BJ (cell line): ENCODE measurements at regions of chr17 and their contacts with region 1.

Region 1: GRCh38 chr17:70767102-70767701 is 597.9 kb downstream of the KCNJ2 start:
- DNase-seq: no peak
- H3K4me3 ChIP-seq: no peak overlapping the region
- H3K27me3 ChIP-seq: no peaks in the 10 kb centered on the region
- CTCF ChIP-seq: peak; percentile 68

Region 2: GRCh38 chr17:70739065-70739464 is 28.1 kb before region 1 on chr17:
- CTCF ChIA-PET with region 1: no interaction called
- POLR2A ChIA-PET with region 1: no interaction called
- DNase-seq: no peak
- H3K4me3 ChIP-seq: no peak overlapping the region
- H3K27me3 ChIP-seq: no peaks in the 10 kb centered on the region
- CTCF ChIP-seq: no peak

Region 3: DNA sequence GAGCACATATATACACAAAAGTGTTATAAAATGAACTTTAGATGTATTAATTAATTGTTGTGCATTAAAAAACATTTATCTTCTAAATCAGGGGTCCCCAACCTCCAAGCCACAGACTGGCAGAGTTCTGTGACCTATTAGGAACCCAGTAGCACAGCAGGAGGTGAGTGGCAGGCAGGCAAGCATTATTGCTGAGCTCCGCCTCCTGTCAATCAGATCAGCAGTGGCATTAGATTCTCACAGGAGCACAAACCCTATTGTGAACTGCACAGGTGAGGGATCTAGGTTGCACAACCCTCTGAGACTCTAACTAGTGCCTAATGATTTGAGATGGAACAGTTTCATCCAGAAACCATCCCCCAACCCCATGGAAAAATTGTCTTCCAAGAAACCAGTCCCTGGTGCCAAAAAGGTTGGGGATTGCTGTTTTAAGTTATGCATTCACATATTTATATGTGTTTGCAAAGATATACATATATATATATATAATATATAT is 14.2 kb before region 1 on chr17:
- CTCF ChIA-PET with region 1: interaction called, 12 read pairs
- POLR2A ChIA-PET with region 1: no interaction called
- DNase-seq: no peak
- H3K4me3 ChIP-seq: no peak overlapping the region
- H3K27me3 ChIP-seq: no peaks in the 10 kb centered on the region
- CTCF ChIP-seq: no peak

Region 4: GRCh38 chr17:70780031-70780430 is 12.8 kb after region 1 on chr17:
- CTCF ChIA-PET with region 1: interaction called, 13 read pairs
- POLR2A ChIA-PET with region 1: no interaction called
- DNase-seq: no peak
- H3K4me3 ChIP-seq: no peak overlapping the region
- H3K27me3 ChIP-seq: no peaks in the 10 kb centered on the region
- CTCF ChIP-seq: no peak